CD4-positive, alpha-beta memory T cell (primary cell): ENCODE measurements at regions of chr9 and their contacts with region 1.

Region 1: GRCh38 chr9:21326526-21327139 is 8.6 kb downstream of the KLHL9 start:
- DNase-seq: peak in 4 of 5 donors; percentile 57 to 66 (median 61)
- H3K4me3 ChIP-seq: no peak overlapping the region
- H3K4me3 Mint-ChIP-seq: peak overlapping the region in 4 of 8 donors; percentile 36 to 74 (median 44)
- H3K27ac ChIP-seq: no peak overlapping the region
- H3K27ac Mint-ChIP-seq: peak overlapping the region in 4 of 7 donors; percentile 24 to 74 (median 48)
- H3K4me1 ChIP-seq: peaks cover 49% of the 10 kb centered on the region
- H3K4me1 Mint-ChIP-seq: peaks cover 34 to 59% (median 52%) of the 10 kb centered on the region in 4 donors
- H3K27me3 ChIP-seq: no peaks in the 10 kb centered on the region
- H3K27me3 Mint-ChIP-seq: no peaks in the 10 kb centered on the region

Region 2: GRCh38 chr9:21154018-21154608 is 172.5 kb before region 1 on chr9:
- CTCF ChIA-PET with region 1: interaction called, 12 read pairs
- POLR2A ChIA-PET with region 1: interaction called, 3 read pairs
- intact Hi-C with region 1: loop called (anchors 2 kb)
- DNase-seq: peak in 4 of 5 donors; percentile 6 to 27 (median 22)
- H3K4me3 ChIP-seq: no peak overlapping the region
- H3K4me3 Mint-ChIP-seq: peak overlapping the region in 1 of 8 donors; percentile 59
- H3K27ac ChIP-seq: no peak overlapping the region
- H3K27ac Mint-ChIP-seq: peak overlapping the region in 2 of 7 donors; percentile 58 to 59
- H3K4me1 ChIP-seq: peaks cover 4% of the 10 kb centered on the region
- H3K4me1 Mint-ChIP-seq: peaks cover 4 to 9% (median 7%) of the 10 kb centered on the region in 4 donors
- H3K27me3 ChIP-seq: no peaks in the 10 kb centered on the region
- H3K27me3 Mint-ChIP-seq: peaks cover 0 to 1% of the 10 kb centered on the region in 2 donors

Region 3: DNA sequence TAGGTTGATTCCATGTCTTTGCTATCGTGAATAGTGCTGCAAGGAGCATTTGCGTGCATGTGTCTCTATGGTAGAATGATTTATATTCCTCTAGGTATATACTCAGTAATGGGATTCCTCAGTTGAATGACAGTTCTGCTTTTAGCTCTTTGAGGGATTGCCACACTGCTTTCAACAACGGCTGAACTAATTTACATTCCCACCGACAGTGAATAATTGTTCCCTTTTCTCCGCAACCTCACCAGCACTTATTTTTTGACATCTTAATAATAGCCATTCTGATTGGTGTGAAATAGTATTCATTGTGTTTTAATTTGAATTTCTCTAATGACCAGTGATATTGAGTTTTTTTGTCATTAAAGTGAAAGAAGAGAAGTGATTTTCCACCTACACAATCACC is 40.0 kb before region 1 on chr9:
- CTCF ChIA-PET with region 1: no interaction called
- POLR2A ChIA-PET with region 1: no interaction called
- intact Hi-C with region 1: no loop called
- DNase-seq: no peak
- H3K4me3 ChIP-seq: no peak overlapping the region
- H3K4me3 Mint-ChIP-seq: no peak overlapping the region
- H3K27ac ChIP-seq: no peak overlapping the region
- H3K27ac Mint-ChIP-seq: no peak overlapping the region
- H3K4me1 ChIP-seq: no peaks in the 10 kb centered on the region
- H3K4me1 Mint-ChIP-seq: no peaks in the 10 kb centered on the region
- H3K27me3 ChIP-seq: no peaks in the 10 kb centered on the region
- H3K27me3 Mint-ChIP-seq: peaks cover 8 to 9% of the 10 kb centered on the region in 2 donors

Region 4: DNA sequence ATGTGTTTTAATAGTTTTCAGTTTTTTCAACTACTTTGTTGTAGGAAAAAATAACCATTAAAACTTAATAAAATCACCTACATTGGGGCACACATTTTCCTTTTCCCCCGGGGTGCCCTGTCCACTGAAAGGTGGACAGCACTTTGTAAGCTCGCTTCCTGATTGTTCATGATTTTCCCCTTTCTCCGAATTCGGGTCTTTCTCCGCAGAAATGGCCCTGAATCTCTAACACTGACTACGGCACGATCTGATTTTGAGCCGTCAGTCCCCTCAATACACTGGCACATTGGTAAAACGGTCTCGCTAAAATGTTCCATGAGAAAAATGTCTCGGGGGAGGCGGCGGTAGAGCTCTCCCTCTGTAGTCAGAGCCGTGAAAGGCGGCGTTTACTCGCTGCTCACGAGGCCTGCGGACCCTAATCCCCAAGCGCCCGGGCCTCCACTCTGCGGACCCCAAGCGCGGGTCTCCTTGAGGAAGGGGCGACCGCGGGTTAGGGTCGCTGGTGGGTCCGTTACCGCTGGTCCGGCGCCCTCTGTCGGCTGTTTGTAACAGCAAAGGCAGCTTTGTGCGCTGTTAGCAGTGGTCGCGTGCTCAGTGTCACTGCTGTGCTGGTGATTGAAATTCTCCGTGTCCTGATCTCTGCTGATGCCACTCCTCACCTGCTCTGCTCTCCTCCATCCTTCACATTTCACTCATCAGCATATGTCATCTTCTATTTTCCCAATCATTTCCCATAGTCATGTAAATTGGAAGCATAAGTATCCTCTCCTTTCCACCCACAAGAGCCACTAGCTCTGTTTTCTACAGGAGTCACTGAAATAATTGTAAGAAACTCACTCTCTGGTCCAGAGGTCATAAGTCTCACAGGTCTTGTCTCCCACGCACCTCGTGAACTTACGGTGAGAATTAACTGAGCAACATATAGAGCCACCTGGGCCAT is 69.4 kb after region 1 on chr9:
- CTCF ChIA-PET with region 1: interaction called, 227 read pairs
- POLR2A ChIA-PET with region 1: interaction called, 18 read pairs
- intact Hi-C with region 1: loop called (anchors 1 kb)
- DNase-seq: peak; percentile 50 to 60 (median 52)
- H3K4me3 ChIP-seq: peak overlapping the region; percentile 19 to 41
- H3K4me3 Mint-ChIP-seq: peak overlapping the region; percentile 61 to 88 (median 78)
- H3K27ac ChIP-seq: no peak overlapping the region
- H3K27ac Mint-ChIP-seq: peak overlapping the region in 2 of 7 donors; percentile 4 to 36
- H3K4me1 ChIP-seq: peaks cover 4% of the 10 kb centered on the region
- H3K4me1 Mint-ChIP-seq: peaks cover 5 to 13% (median 10%) of the 10 kb centered on the region in 4 donors
- H3K27me3 ChIP-seq: peaks cover 14% of the 10 kb centered on the region
- H3K27me3 Mint-ChIP-seq: peaks cover 41 to 46% of the 10 kb centered on the region in 2 donors

Region 5: GRCh38 chr9:21434202-21435014 is 107.8 kb after region 1 on chr9:
- CTCF ChIA-PET with region 1: interaction called, 24 read pairs
- POLR2A ChIA-PET with region 1: interaction called, 3 read pairs
- intact Hi-C with region 1: no loop called
- DNase-seq: peak; percentile 31 to 55 (median 40)
- H3K4me3 ChIP-seq: no peak overlapping the region
- H3K4me3 Mint-ChIP-seq: no peak overlapping the region
- H3K27ac ChIP-seq: no peak overlapping the region
- H3K27ac Mint-ChIP-seq: no peak overlapping the region
- H3K4me1 ChIP-seq: no peaks in the 10 kb centered on the region
- H3K4me1 Mint-ChIP-seq: no peaks in the 10 kb centered on the region
- H3K27me3 ChIP-seq: no peaks in the 10 kb centered on the region
- H3K27me3 Mint-ChIP-seq: peaks cover 14 to 19% of the 10 kb centered on the region in 2 donors

Region 6: GRCh38 chr9:21576331-21577189 is 249.9 kb after region 1 on chr9:
- CTCF ChIA-PET with region 1: no interaction called
- POLR2A ChIA-PET with region 1: no interaction called
- intact Hi-C with region 1: loop called (anchors 2 kb)
- DNase-seq: peak; percentile 31 to 56 (median 43)
- H3K4me3 ChIP-seq: no peak overlapping the region
- H3K4me3 Mint-ChIP-seq: peak overlapping the region; percentile 3 to 79 (median 55)
- H3K27ac ChIP-seq: no peak overlapping the region
- H3K27ac Mint-ChIP-seq: peak overlapping the region; percentile 19 to 94 (median 81)
- H3K4me1 ChIP-seq: peaks cover 35% of the 10 kb centered on the region
- H3K4me1 Mint-ChIP-seq: peaks cover 24 to 39% (median 34%) of the 10 kb centered on the region in 4 donors
- H3K27me3 ChIP-seq: no peaks in the 10 kb centered on the region
- H3K27me3 Mint-ChIP-seq: no peaks in the 10 kb centered on the region